MCF 10A (cell line): ENCODE measurements at regions of chr21 and their contacts with region 1.

Region 1: DNA sequence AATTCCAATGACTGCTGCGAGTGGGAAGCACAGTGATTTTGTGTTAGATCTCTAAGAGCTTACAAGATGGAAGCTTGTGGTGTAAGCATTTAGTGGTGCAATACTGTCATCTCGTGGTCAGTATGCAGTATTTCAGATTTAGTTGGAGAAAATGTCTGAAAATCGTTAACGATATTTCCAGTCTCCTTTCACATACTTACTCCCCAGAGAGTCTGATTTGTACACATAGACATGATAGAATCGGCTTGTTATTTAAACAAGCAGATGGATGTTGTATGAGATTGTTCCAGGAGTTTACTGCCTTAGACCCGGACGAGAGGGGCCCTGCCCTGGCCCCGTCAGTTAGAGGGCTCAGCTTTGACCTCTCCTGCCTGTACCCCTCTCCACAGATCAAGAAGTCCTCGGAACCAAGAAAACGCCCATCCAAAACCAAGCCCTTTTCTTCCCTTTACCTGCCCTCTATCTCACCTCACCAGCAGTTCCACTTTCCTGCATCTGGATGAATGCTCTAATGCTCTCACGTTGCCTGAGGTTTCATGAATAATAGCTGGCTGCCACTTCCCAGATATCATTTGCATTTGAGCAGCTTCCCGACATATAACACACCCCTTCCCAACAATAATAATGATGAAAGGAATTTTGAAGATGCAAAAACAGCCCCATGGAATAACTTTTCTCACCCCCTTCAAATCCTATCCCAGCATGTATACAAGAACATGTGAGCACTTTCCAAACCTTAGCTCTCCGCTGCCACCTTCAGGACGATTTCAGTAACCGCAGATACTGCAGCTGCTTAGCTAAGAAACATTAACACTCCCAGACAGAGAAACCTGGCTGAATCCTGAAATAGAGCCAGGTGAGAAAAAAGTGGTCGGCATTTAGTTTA is 247.3 kb downstream of the LTN1 start:
- DNase-seq: peak; percentile 84
- H3K4me3 Mint-ChIP-seq: no peak overlapping the region
- H3K27ac Mint-ChIP-seq: no peak overlapping the region
- H3K4me1 Mint-ChIP-seq: no peaks in the 10 kb centered on the region
- H3K27me3 Mint-ChIP-seq: no peaks in the 10 kb centered on the region
- CTCF ChIP-seq: peak; percentile 88

Region 2: DNA sequence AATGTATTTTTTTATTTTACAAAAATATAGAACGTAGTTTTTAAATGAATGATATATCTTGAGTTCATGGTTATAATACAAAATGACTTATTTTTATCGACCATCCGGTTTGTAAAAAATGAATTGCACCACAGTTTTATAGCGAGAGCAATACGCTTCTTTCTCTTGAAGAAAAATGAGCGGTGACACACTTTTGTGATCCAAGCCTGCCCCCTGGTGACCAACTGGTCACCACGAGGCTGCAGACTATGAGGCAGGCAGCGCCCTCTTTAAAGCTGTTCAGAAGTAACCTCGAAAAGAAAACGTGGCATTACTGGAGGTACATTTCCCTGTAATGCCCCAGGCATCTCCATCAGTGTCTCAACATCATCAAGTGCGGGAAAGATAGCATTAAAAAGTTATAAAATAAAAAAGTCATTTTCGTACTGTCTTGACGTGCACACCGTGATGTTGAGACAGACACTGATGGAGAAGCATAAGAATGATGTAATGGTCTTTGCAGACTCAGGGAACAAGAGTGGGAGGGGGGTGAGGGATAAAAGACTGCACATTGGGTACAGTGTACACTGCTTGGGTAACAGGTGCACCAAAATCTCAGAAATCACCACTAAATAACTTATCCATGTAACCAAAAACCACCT is 1044.3 kb before region 1 on chr21:
- CTCF ChIA-PET with region 1: interaction called, 26 read pairs
- POLR2A ChIA-PET with region 1: no interaction called
- intact Hi-C with region 1: loop called (anchors 1 kb)
- DNase-seq: peak; percentile 88
- H3K4me3 Mint-ChIP-seq: no peak overlapping the region
- H3K27ac Mint-ChIP-seq: no peak overlapping the region
- H3K4me1 Mint-ChIP-seq: no peaks in the 10 kb centered on the region
- H3K27me3 Mint-ChIP-seq: no peaks in the 10 kb centered on the region
- CTCF ChIP-seq: peak; percentile 89

Region 3: GRCh38 chr21:28336314-28336713 is 409.1 kb before region 1 on chr21:
- CTCF ChIA-PET with region 1: interaction called, 121 read pairs
- POLR2A ChIA-PET with region 1: no interaction called
- intact Hi-C with region 1: loop called (anchors 1 kb)
- DNase-seq: peak; percentile 47
- H3K4me3 Mint-ChIP-seq: no peak overlapping the region
- H3K27ac Mint-ChIP-seq: no peak overlapping the region
- H3K4me1 Mint-ChIP-seq: peaks cover 6% of the 10 kb centered on the region
- H3K27me3 Mint-ChIP-seq: no peaks in the 10 kb centered on the region
- CTCF ChIP-seq: peak; percentile 46

Region 4: GRCh38 chr21:28633839-28634555 is 111.4 kb before region 1 on chr21:
- CTCF ChIA-PET with region 1: interaction called, 22 read pairs
- POLR2A ChIA-PET with region 1: interaction called, 8 read pairs
- intact Hi-C with region 1: no loop called
- DNase-seq: peak; percentile 68
- H3K4me3 Mint-ChIP-seq: no peak overlapping the region
- H3K27ac Mint-ChIP-seq: peak overlapping the region; percentile 84
- H3K4me1 Mint-ChIP-seq: peaks cover 44% of the 10 kb centered on the region
- H3K27me3 Mint-ChIP-seq: no peaks in the 10 kb centered on the region
- CTCF ChIP-seq: no peak

Region 5: GRCh38 chr21:28771790-28772501 is 26.6 kb after region 1 on chr21:
- CTCF ChIA-PET with region 1: no interaction called
- POLR2A ChIA-PET with region 1: no interaction called
- intact Hi-C with region 1: no loop called
- DNase-seq: peak; percentile 57
- H3K4me3 Mint-ChIP-seq: peak overlapping the region; percentile 2
- H3K27ac Mint-ChIP-seq: peak overlapping the region; percentile 41
- H3K4me1 Mint-ChIP-seq: no peaks in the 10 kb centered on the region
- H3K27me3 Mint-ChIP-seq: no peaks in the 10 kb centered on the region
- CTCF ChIP-seq: no peak

Region 6: DNA sequence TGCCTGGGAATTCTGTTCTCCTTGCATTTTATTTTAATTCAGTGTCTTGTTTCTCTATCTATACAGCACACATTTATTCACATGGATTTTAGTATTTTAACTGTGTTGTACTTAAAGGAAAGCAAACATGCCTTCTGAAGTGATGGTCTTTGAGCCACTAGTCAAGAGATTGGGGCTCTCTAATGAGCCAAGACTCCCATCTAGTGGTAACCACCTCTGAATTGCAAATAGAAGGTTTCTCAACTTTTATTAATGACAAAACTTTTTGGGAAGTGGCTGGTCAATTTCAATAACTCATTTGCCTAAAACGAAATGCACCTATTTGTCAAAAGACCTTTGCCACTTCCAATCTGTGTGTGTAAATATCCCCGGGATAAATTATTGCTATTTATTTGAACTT is 47.7 kb after region 1 on chr21:
- CTCF ChIA-PET with region 1: interaction called, 4 read pairs
- POLR2A ChIA-PET with region 1: no interaction called
- intact Hi-C with region 1: loop called (anchors 1 kb)
- DNase-seq: peak; percentile 31
- H3K4me3 Mint-ChIP-seq: no peak overlapping the region
- H3K27ac Mint-ChIP-seq: no peak overlapping the region
- H3K4me1 Mint-ChIP-seq: no peaks in the 10 kb centered on the region
- H3K27me3 Mint-ChIP-seq: no peaks in the 10 kb centered on the region
- CTCF ChIP-seq: peak; percentile 20